Activated CD4-positive, alpha-beta T cell treated with anti-CD3 and anti-CD28 coated beads, Interleukin-2, amount 10 ng/mL, durations not matched to agents 24 days and 14 days (primary cell): ENCODE measurements at regions of chr1 and their contacts with region 1.

Region 1: DNA sequence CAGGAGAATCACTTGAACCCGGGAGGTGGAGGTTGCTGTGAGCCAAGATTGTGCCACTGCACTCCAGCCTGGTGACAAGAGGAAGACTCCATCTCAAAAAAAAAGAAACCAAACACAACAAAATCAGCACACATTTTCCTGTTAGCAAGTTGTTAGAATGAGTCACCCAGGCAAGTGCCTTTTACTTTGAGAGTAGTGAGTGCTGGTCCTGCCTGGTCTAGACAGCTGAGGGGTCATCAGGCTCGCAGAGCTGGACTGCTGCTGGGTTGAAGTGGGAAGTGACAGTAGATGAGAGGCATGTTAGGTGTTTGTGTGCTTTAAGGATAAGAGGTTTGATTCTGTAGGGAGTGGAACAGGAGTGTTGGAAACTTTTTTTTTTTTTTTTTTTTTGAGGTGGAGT is 31.9 kb downstream of the GNPAT start:
- DNase-seq: peak; percentile 78
- H3K4me3 Mint-ChIP-seq: peak overlapping the region; percentile 75
- H3K27ac Mint-ChIP-seq: peak overlapping the region; percentile 99
- H3K4me1 Mint-ChIP-seq: peaks cover 33% of the 10 kb centered on the region
- H3K27me3 Mint-ChIP-seq: no peaks in the 10 kb centered on the region

Region 2: GRCh38 chr1:230832476-230832875 is 440.4 kb before region 1 on chr1:
- intact Hi-C with region 1: no loop called
- DNase-seq: no peak
- H3K4me3 Mint-ChIP-seq: no peak overlapping the region
- H3K27ac Mint-ChIP-seq: no peak overlapping the region
- H3K4me1 Mint-ChIP-seq: no peaks in the 10 kb centered on the region
- H3K27me3 Mint-ChIP-seq: peaks cover 9% of the 10 kb centered on the region

Region 3: DNA sequence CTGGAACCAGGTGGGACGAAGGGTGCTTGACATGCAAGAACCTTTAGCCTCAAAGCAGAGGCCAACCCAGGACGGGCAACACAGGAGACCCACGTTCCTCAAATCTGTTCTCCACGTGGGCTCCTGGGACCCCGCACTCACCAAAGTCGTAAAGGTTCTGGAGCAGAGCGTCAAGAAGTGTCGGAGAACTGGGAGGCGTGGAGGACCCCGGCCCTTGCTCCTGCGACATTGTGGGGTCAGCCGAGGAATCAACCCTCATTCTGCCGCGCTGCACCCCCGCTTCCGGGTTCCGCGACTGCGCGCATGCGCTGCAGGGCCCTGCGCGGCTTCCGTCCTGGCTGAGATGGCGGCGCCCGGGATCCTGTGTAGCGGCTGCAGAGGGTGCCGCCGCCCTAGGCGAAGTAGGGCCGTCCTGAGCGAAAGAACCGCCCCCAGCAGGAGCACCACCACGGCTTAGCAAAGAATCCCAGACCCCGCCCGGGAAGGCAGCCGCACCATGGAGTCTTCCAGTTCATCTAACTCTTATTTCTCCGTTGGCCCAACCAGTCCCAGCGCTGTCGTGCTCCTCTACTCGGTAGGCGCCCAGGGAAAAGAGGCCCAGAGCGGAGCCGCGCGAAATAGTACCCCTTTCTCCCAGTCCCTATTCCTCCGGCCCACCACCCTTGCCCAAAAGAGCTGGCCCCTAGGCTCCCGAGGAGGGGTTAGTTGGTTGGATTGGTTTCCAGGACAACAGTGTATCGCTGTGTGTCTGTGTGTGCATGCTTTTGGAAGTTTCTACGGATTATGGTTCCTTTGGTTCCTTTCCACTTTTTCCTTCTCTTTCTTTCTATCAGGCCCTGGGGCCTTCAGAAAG is 31.8 kb before region 1 on chr1 and contains the start of gene GNPAT:
- intact Hi-C with region 1: loop called (anchors 1 kb)
- DNase-seq: peak; percentile 98
- H3K4me3 Mint-ChIP-seq: peak within 1 kb of the TSS; percentile 94
- H3K27ac Mint-ChIP-seq: peak within 1 kb of the TSS; percentile 97
- H3K4me1 Mint-ChIP-seq: peaks cover 52% of the 10 kb centered on the region
- H3K27me3 Mint-ChIP-seq: no peaks in the 10 kb centered on the region
- total RNA-seq, gene GNPAT: 45.6 and 47.5 TPM in 2 replicates

Region 4: DNA sequence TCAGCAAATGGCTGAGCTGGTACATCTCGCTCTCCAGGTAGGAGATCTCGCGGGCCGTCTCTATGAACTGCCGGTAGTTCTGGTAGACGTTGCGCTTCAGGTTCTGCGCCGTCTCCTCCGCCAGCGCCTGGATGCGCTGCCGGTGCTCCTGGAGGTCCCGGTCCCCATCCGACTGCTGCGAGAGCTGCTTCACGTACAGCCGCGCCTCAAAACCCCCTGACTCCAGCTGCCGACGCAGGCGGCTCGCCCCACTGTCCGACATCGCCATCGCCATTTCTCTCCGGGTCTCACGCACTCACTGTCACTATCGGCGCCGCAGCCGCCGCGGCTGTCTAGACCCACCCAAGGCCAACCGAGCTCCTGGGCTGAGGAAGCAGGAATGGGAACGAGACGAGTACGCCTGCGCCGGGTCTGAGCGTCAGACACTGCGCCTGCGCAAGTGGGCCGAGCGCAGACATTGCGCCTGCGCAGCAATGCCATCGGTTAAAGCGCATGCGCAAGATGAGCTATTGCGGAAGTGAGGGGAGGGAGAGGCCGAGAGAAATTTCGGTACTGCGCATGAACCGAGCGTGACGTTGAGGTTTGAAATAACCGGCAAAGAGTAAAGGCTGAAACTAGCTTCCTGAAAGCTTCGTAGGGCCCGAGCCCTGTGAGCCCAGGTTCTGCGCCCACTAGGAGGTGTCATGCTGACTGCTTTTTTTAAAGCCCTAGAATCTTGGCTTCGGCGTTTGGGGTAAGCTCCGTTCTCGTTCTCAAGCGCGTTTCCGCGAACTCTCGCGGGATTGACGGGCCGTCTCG is 64.8 kb after region 1 on chr1 and contains the start of gene EXOC8:
- intact Hi-C with region 1: loop called (anchors 1 kb)
- DNase-seq: peak; percentile 100
- H3K4me3 Mint-ChIP-seq: peak within 1 kb of the TSS; percentile 95
- H3K27ac Mint-ChIP-seq: peak within 1 kb of the TSS; percentile 98
- H3K4me1 Mint-ChIP-seq: peaks cover 44% of the 10 kb centered on the region
- H3K27me3 Mint-ChIP-seq: peaks cover 3% of the 10 kb centered on the region
- total RNA-seq, gene EXOC8: 12.4 and 13.3 TPM in 2 replicates

Region 5: DNA sequence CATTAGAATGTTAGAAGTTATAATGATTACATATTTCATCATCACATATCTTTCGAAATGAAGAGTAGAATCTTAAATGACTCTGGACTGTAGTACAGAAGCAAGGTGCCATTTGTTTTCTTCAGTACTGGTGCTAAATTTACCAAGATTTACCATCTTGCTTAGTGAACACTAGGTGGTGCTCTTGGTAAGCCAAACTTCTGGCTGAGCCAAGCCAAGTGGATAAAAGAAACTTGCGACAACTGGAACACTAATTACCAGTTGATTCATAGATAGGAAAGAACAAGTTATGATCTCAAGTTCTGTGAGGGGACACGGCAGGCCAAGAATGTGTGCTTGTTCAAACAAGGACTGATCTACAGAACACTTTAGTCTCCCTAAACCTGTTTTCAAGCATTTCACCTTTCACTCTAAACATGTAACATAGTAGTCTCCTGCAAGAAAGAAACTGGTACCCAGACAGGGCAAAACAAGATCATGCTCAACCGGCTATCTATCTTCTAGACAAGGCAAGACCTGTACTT is 85.0 kb after region 1 on chr1:
- intact Hi-C with region 1: no loop called
- DNase-seq: peak; percentile 80
- H3K4me3 Mint-ChIP-seq: no peak overlapping the region
- H3K27ac Mint-ChIP-seq: no peak overlapping the region
- H3K4me1 Mint-ChIP-seq: peaks cover 12% of the 10 kb centered on the region
- H3K27me3 Mint-ChIP-seq: no peaks in the 10 kb centered on the region

Region 6: DNA sequence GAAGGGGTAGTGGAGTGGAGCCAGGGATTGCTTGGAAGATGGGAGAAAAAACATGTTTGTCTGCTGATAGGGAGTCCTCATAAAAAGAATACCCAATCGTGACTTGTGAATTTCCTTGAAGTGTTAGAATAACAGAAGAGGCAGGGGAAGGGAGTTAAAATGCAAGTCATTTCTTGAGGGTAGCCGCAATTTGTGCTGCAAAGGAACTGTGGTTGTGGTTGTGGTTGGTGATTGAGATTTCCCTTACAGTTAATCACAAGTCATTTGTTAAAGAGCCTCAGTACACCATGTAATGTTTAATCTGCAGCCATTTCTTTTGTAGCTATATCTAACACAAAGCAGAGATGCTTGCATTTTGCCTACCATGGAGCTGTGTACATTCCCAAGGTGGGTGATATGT is 187.7 kb after region 1 on chr1:
- intact Hi-C with region 1: loop called (anchors 5 kb)
- DNase-seq: peak; percentile 92
- H3K4me3 Mint-ChIP-seq: no peak overlapping the region
- H3K27ac Mint-ChIP-seq: peak overlapping the region; percentile 66
- H3K4me1 Mint-ChIP-seq: peaks cover 35% of the 10 kb centered on the region
- H3K27me3 Mint-ChIP-seq: peaks cover 69% of the 10 kb centered on the region

Region 7: DNA sequence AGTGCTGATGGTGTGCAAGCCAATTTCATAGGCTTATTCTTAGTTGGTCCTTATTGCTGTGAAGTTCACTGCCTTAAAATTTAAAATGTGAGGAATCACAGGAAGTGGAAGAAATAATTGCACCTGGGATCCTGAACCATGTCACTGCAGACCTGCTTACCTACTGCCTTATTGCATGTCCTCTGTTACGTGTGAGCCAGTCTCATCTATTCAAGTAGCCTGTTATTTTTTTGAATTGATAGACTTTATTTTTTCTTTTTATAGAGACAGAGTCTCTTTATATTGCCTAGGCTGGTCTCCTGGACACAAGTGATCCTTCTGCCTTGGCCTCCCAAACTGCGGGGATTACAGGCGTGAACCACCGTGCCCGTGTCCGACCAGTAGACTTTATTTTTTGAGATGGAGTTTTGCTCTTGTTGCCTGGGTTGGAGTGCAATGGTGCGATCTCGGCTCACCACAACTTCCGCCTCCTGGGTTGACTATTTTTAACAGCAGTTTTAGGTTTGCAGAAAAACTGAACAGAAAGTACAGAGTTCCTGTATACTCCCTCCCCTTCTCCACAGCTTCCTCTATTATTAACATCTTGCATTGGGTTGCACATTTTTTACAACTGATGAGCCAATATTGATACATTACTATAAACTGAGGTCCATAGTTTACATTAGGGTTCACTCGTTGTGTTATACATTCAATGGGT is 339.7 kb after region 1 on chr1:
- intact Hi-C with region 1: loop called (anchors 1 kb)
- DNase-seq: peak; percentile 89
- H3K4me3 Mint-ChIP-seq: peak overlapping the region; percentile 79
- H3K27ac Mint-ChIP-seq: peak overlapping the region; percentile 86
- H3K4me1 Mint-ChIP-seq: peaks cover 45% of the 10 kb centered on the region
- H3K27me3 Mint-ChIP-seq: peaks cover 8% of the 10 kb centered on the region

Region 8: DNA sequence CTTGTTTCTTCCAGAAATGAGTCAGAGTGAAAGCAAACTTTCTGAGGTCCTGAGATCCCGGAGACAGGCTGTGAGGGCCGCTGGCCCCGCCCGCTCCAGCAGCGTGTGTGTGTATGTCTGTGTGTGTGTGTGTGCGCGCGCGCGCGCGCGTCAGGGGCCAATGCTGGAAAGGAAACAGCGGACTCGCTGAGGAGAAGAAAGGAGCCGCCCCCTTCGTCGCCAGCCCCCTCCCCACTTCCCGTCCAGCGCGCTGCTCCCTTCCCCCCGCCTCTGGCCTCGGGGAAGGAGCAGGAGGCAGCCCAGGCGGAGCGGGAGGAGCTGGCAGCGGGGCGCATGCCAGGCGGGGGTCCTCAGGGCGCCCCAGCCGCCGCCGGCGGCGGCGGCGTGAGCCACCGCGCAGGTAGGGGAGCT is 353.7 kb after region 1 on chr1 and contains the start of gene DISC1:
- intact Hi-C with region 1: loop called (anchors 5 kb)
- DNase-seq: peak; percentile 93
- H3K4me3 Mint-ChIP-seq: peak within 1 kb of the TSS; percentile 86
- H3K27ac Mint-ChIP-seq: peak within 1 kb of the TSS; percentile 82
- H3K4me1 Mint-ChIP-seq: peaks cover 30% of the 10 kb centered on the region
- H3K27me3 Mint-ChIP-seq: peaks cover 30% of the 10 kb centered on the region
- total RNA-seq, gene DISC1: 1.6 and 3.1 TPM in 2 replicates